PC-9 (cell line): ENCODE measurements at regions of chr1 and their contacts with region 1.

Region 1: DNA sequence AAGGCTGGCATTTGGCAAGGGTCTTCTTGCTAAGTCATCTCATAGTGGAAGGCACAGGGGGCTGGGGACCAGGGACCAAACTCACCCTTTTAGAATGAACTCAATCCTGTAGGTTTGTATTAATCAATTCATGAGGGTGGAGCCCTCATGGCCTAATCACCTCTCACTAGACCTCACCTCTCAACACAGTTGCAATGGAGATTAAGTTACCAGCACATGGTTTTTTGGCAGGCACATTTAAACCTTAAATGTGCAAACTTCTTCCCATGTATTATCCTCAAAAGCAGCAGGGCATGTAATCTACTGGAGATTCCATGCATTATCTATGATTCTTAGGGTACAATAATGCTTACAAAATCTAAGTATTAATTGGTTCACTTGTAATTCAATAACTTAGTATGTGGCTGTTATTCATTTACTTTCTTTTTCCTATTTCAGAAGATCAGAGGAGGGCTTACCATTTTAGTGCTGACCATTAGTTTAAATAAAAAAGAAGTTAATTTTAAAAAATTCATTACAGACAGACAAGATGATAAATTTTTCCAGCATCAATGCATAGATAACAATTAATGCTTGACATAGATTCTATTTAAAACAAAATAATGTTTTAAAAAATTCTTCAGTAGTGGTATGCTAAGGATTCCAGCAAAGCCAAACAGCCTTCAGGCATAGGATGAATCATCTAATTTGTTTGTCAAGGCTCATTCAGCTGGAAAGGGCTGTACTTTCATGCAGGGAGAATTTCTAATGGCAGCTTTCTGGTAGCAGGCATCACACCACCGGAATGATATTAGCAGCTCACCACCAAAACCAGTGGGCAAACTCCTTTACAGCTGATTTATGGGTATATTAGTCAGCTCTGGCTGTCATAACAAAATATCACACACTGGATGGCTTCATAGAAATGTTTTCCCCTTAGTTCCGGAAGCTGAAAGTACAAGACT is 124.6 kb upstream of the ZNF648 start:
- DNase-seq: peak; percentile 76 to 97
- H3K4me3 ChIP-seq: peak overlapping the region; percentile 12; the same call in 1 of the 2 replicates
- H3K27ac ChIP-seq: peak overlapping the region; percentile 66
- H3K4me1 ChIP-seq: peaks cover 56% of the 10 kb centered on the region
- H3K27me3 ChIP-seq: no peaks in the 10 kb centered on the region
- CTCF ChIP-seq: no peak

Region 2: GRCh38 chr1:180502360-180503273 is 1683.5 kb before region 1 on chr1 and contains the start of gene ACBD6:
- CTCF ChIA-PET with region 1: interaction called, 5 read pairs
- POLR2A ChIA-PET with region 1: no interaction called
- intact Hi-C with region 1: loop called (anchors 10 kb)
- DNase-seq: peak; percentile 71 to 85
- H3K4me3 ChIP-seq: peak within 1 kb of the TSS; percentile 94
- H3K27ac ChIP-seq: peak within 1 kb of the TSS; percentile 88
- H3K4me1 ChIP-seq: peaks cover 27% of the 10 kb centered on the region
- H3K27me3 ChIP-seq: no peaks in the 10 kb centered on the region
- CTCF ChIP-seq: 0 out of 2 replicates have a peak, but pooled peaks have one; percentile 16
- total RNA-seq, gene ACBD6: 52.2 and 61.0 TPM in 2 replicates

Region 3: DNA sequence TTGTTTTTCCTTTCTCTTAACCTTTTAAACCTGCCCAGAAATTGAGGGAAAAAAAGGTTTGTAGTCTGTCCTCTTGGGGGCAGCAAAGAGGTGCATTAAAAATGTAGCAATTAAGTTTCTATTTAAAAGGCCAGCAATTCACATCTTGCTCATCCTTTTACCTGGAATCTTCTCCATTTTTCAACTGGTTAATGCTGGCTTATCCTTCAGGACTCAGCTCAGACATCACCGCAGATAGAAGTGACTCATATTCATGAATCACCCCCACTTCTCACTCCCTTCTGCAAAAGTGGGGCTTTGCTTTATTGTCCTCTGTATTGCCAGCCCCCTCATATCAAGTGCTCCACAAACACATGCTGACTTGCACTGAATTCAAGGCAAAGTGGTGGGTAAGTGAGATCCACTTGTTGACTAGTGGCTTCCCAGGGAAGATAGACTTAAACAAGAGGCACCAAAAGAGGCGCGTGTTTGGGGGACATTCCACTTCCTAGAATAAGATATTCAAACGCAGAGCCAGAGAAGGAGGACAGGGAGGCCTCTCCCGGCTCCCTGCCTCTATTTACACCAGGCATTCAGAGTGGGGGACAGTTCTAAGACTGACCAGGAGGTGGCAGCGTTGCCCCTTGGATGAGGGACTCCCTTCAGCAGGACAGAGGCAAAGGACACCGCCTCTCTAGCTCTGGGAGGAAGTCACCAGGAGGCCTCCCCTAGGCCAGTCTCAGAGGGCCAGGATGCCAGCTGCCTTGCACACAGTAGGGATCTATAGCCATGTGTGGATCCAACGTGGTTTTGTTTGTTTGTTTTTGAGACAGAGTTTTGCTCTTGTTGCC is 101.4 kb before region 1 on chr1:
- CTCF ChIA-PET with region 1: no interaction called
- POLR2A ChIA-PET with region 1: interaction called, 3 read pairs
- intact Hi-C with region 1: loop called (anchors 1 kb)
- DNase-seq: peak; percentile 59 to 82
- H3K4me3 ChIP-seq: no peak overlapping the region
- H3K27ac ChIP-seq: no peak overlapping the region
- H3K4me1 ChIP-seq: peaks cover 30% of the 10 kb centered on the region
- H3K27me3 ChIP-seq: 0 out of 2 replicates have a peak, but pooled peaks cover 3% of the 10 kb centered on the region
- CTCF ChIP-seq: peak; percentile 90

Region 4: DNA sequence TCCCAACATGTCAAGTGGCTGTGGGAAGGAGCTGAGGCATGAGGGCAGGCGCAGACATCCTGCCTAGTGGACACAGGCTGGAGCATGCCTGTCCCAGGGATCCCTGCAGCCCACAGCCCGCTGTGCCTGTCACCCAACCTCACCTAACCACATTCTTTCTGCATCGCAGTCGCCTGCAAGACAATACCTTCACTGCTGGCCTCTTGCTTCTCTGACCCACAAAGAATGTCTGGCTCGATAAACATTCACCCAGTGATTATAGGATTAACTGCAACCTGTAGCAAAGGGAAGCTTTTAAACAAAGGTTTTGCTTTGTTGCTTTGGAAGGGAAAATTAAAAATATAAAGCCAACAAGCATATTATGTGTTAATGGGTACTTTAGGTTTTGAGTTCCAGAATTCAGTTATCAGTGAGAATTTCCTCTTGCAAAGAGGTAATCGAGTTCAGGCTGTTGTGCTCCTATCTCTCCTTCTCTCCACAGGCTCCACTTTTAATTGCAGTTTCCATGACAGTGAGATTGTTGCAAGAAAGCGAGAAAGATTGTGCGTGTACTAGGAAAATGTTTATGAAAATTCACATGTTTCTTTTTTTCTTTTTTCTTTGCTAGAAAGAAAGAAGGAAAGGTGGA is 84.6 kb before region 1 on chr1:
- CTCF ChIA-PET with region 1: no interaction called
- POLR2A ChIA-PET with region 1: interaction called, 3 read pairs
- intact Hi-C with region 1: loop called (anchors 1 kb)
- DNase-seq: peak; percentile 91 to 95
- H3K4me3 ChIP-seq: peak overlapping the region; percentile 0; the same call in 1 of the 2 replicates
- H3K27ac ChIP-seq: peak overlapping the region; percentile 54
- H3K4me1 ChIP-seq: peaks cover 24% of the 10 kb centered on the region
- H3K27me3 ChIP-seq: no peaks in the 10 kb centered on the region
- CTCF ChIP-seq: no peak

Region 5: DNA sequence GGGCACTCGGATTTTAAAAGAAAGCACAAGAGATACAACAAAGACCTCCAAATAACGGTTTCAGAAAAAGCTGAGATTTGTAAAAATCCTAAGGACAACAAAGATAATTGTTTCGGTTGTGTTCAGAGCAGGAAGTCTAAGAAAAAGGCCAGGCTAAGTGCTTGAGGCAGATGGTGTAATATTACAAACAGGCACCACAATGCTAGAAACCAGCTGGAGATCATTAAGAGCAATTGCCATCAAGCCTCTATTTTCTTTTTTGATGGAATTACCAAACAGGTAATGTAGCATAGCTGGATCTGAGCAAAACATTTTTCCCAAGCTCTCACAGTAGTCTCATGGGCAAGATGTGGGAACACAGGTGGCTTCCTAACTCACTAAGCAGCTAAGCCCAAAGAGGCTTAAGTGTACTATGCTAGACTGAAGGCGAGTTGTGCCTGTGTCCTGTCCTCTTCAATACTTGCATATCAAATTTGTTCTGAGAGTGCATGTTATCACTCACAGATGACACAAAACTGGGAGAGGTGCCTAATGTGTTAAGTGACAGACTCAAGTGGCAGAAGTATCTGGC is 43.9 kb after region 1 on chr1:
- CTCF ChIA-PET with region 1: no interaction called
- POLR2A ChIA-PET with region 1: interaction called, 6 read pairs
- intact Hi-C with region 1: loop called (anchors 2 kb)
- DNase-seq: peak in 1 of 2 experiments; percentile 70
- H3K4me3 ChIP-seq: no peak overlapping the region
- H3K27ac ChIP-seq: no peak overlapping the region
- H3K4me1 ChIP-seq: peaks cover 39% of the 10 kb centered on the region
- H3K27me3 ChIP-seq: no peaks in the 10 kb centered on the region
- CTCF ChIP-seq: no peak

Region 6: DNA sequence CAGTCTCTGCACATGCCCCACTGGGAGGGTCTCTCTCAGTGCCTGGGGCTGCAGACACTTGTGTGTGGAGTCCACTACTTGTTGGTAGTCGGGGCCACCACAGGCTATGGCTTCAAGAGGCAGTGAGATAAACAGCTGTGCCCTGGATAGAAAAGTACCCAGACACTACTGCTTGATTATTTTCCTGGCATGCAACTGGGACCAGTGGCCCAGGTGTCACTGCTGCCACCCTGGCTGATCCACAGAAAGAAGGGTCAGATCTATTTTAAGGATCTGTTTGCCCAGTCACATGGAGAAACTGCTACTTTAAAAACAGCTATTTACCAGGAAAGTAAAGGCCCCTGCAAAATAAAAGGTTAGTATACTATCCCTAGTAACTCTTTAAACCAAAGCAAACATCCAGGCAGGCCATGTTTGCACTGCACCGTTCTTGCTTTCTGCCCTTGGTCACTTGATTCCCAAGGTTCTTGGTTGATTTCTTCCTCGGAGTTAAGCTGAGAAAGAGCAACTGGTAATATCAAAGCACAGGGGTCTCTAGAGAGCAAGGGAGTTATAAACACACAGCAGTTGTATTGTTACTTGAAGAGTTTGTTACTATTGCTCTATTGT is 105.6 kb after region 1 on chr1:
- CTCF ChIA-PET with region 1: no interaction called
- POLR2A ChIA-PET with region 1: no interaction called
- intact Hi-C with region 1: no loop called
- DNase-seq: no peak
- H3K4me3 ChIP-seq: no peak overlapping the region
- H3K27ac ChIP-seq: no peak overlapping the region
- H3K4me1 ChIP-seq: peaks cover 13% of the 10 kb centered on the region
- H3K27me3 ChIP-seq: no peaks in the 10 kb centered on the region
- CTCF ChIP-seq: no peak

Region 7: GRCh38 chr1:182391362-182392044 is 205.4 kb after region 1 on chr1 and contains the start of gene GLUL:
- CTCF ChIA-PET with region 1: interaction called, 3 read pairs
- POLR2A ChIA-PET with region 1: interaction called, 3 read pairs
- intact Hi-C with region 1: loop called (anchors 1 kb)
- DNase-seq: peak; percentile 73 to 89
- H3K4me3 ChIP-seq: peak within 1 kb of the TSS; percentile 68
- H3K27ac ChIP-seq: peak within 1 kb of the TSS; percentile 50; the same call in 1 of the 2 replicates
- H3K4me1 ChIP-seq: peaks cover 23% of the 10 kb centered on the region
- H3K27me3 ChIP-seq: no peaks in the 10 kb centered on the region
- CTCF ChIP-seq: no peak; the same call in 1 of the 2 replicates
- total RNA-seq, gene GLUL: 335 and 348 TPM in 2 replicates

Region 8: DNA sequence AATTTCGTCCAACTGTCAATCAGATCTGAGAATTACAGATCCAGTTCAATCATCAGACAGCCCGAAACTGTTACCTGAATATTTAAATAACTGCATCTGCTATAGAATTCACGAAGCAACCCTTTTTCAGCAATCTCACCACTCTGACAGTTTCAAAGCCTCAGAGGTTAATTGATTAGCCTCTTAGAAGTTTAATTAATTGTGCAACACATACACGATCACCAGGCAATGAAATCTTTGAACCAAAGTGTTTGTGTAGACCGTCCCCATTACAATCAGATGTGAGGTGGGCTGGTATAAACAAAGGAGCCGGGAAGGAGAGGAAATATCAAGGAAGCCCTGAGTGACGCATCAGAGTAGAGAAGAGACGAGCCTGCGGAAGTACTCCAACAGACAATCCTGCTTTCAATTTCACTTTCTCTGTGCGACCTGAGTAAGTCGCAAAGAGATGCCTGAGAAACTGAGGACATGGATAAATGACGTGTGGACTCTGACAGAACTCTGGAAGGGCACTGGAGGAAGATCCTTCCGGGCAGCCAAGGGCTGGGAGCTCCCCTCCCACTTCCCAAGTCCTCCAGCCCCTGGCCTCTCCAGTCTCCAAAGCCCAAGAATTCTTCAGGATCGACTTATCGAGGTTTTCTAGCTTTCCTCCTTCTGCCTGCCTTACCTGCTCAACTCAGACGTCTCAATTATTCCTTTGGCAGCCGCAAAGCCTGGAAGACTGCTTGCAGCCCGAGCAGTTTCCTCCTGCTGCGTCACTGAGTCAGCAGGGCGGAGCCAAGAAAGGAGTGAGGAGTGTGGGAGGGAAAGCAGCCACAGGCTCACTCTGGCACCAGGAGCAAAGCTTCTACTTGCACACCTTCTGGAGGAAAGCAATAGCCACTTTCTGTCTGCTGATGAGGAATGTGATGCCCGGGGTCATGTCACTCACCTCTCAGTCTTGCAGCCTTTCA is 402.7 kb after region 1 on chr1 and contains the start of gene RNASEL:
- CTCF ChIA-PET with region 1: interaction called, 10 read pairs
- POLR2A ChIA-PET with region 1: no interaction called
- intact Hi-C with region 1: no loop called
- DNase-seq: peak; percentile 69 to 78
- H3K4me3 ChIP-seq: peak within 1 kb of the TSS; percentile 64
- H3K27ac ChIP-seq: peak within 1 kb of the TSS; percentile 69
- H3K4me1 ChIP-seq: peaks cover 12% of the 10 kb centered on the region
- H3K27me3 ChIP-seq: no peaks in the 10 kb centered on the region
- CTCF ChIP-seq: no peak
- total RNA-seq, gene RNASEL: 4.9 and 6.3 TPM in 2 replicates